Breast epithelium (tissue), 4 donors: ENCODE measurements at regions of chr14 and their contacts with region 1.

Region 1: GRCh38 chr14:50469982-50470381 is 62.4 kb downstream of the MAP4K5 start:
- DNase-seq: no peak
- H3K4me3 ChIP-seq: no peak overlapping the region
- H3K27ac ChIP-seq: no peak overlapping the region
- H3K4me1 ChIP-seq: no peaks in the 10 kb centered on the region
- H3K27me3 ChIP-seq: no peaks in the 10 kb centered on the region
- CTCF ChIP-seq: no peak
- POLR2A ChIP-seq: no peak

Region 2: GRCh38 chr14:49959822-49960408 is 510.1 kb before region 1 on chr14:
- intact Hi-C with region 1: loop called (anchors 5 kb)
- DNase-seq: no peak
- H3K4me3 ChIP-seq: peak overlapping the region in 1 of 3 donors; percentile 3
- H3K27ac ChIP-seq: peak overlapping the region in 1 of 2 donors; percentile 84
- H3K4me1 ChIP-seq: peaks cover 0 to 12% of the 10 kb centered on the region in 2 donors
- H3K27me3 ChIP-seq: no peaks in the 10 kb centered on the region
- CTCF ChIP-seq: no peak
- POLR2A ChIP-seq: no peak

Region 3: DNA sequence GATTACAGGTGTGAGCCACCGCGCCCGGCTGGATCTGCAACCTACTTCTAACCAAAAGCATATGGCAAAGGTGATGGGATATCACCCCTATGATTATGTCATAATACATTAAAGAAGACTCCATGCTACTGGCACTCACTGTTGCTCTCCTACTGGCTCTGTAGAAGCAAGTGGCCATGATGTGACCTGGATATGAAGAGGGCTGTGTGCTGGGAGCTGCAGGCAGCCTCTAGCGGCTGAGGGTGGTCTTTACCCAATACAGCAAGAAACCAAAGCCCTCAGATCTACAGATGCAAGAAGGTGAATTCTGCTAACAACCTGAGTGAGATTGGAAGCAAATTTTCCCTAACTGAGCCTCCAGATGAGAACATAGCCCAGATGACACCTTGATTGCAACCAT is 659.1 kb after region 1 on chr14:
- intact Hi-C with region 1: no loop called
- DNase-seq: no peak
- H3K4me3 ChIP-seq: no peak overlapping the region
- H3K27ac ChIP-seq: no peak overlapping the region
- H3K4me1 ChIP-seq: no peaks in the 10 kb centered on the region
- H3K27me3 ChIP-seq: no peaks in the 10 kb centered on the region
- CTCF ChIP-seq: no peak
- POLR2A ChIP-seq: no peak